ENCODE measurements at regions of chr14 and their contacts with region 1.

Region 1: GRCh38 chr14:106605548-106606448 is 1079.4 kb downstream of the TMEM121 start:
- DNase-seq: peak; percentile 87
- H3K4me3 Mint-ChIP-seq: no peak overlapping the region
- H3K27ac Mint-ChIP-seq: no peak overlapping the region
- H3K4me1 Mint-ChIP-seq: peaks cover 6% of the 10 kb centered on the region
- H3K27me3 Mint-ChIP-seq: peaks cover 69% of the 10 kb centered on the region

Region 2: GRCh38 chr14:106586098-106586704 is 19.6 kb before region 1 on chr14:
- CTCF ChIA-PET with region 1: interaction called, 24 read pairs
- DNase-seq: peak; percentile 79
- H3K4me3 Mint-ChIP-seq: no peak overlapping the region
- H3K27ac Mint-ChIP-seq: no peak overlapping the region
- H3K4me1 Mint-ChIP-seq: peaks cover 4% of the 10 kb centered on the region
- H3K27me3 Mint-ChIP-seq: peaks cover 46% of the 10 kb centered on the region

Region 3: GRCh38 chr14:106622200-106622745 is 16.5 kb after region 1 on chr14:
- CTCF ChIA-PET with region 1: interaction called, 48 read pairs
- DNase-seq: peak; percentile 49
- H3K4me3 Mint-ChIP-seq: no peak overlapping the region
- H3K27ac Mint-ChIP-seq: no peak overlapping the region
- H3K4me1 Mint-ChIP-seq: peaks cover 14% of the 10 kb centered on the region
- H3K27me3 Mint-ChIP-seq: peaks cover 66% of the 10 kb centered on the region

Region 4: DNA sequence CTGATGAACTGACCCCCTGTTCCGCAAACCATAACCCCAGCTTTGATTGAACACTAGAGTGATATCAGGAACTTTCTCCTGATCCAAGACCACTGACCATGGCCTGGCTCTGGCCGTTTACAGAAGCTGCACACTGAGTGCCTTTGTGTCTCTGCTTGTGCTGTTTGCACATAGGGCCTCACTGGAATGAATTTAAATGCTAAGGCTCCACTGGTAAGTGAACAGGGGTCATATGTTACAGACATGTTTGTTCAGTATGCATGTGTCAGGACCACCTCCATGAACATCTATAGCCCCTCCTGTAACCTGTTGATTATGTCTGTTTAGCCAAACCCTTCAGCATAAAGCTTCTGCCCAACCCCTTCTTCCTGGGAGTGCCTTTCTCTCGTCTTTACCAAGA is 160.3 kb after region 1 on chr14:
- CTCF ChIA-PET with region 1: no interaction called
- DNase-seq: no peak
- H3K4me3 Mint-ChIP-seq: no peak overlapping the region
- H3K27ac Mint-ChIP-seq: no peak overlapping the region
- H3K4me1 Mint-ChIP-seq: peaks cover 48% of the 10 kb centered on the region
- H3K27me3 Mint-ChIP-seq: peaks cover 4% of the 10 kb centered on the region